IMR-90 (cell line): ENCODE measurements at regions of chr17 and their contacts with region 1.

Region 1: GRCh38 chr17:35460354-35460851 is 11.8 kb upstream of the SLFN13 start:
- DNase-seq: no peak
- ATAC-seq: no peak; the same call in 1 of the 2 replicates
- H3K4me3 ChIP-seq: no peak overlapping the region
- H3K27ac ChIP-seq: no peak overlapping the region
- H3K4me1 ChIP-seq: no peaks in the 10 kb centered on the region
- H3K27me3 ChIP-seq: peaks cover 20% of the 10 kb centered on the region
- CTCF ChIP-seq: no peak
- POLR2A ChIP-seq: no peak
- RAD21 ChIP-seq: no peak

Region 2: DNA sequence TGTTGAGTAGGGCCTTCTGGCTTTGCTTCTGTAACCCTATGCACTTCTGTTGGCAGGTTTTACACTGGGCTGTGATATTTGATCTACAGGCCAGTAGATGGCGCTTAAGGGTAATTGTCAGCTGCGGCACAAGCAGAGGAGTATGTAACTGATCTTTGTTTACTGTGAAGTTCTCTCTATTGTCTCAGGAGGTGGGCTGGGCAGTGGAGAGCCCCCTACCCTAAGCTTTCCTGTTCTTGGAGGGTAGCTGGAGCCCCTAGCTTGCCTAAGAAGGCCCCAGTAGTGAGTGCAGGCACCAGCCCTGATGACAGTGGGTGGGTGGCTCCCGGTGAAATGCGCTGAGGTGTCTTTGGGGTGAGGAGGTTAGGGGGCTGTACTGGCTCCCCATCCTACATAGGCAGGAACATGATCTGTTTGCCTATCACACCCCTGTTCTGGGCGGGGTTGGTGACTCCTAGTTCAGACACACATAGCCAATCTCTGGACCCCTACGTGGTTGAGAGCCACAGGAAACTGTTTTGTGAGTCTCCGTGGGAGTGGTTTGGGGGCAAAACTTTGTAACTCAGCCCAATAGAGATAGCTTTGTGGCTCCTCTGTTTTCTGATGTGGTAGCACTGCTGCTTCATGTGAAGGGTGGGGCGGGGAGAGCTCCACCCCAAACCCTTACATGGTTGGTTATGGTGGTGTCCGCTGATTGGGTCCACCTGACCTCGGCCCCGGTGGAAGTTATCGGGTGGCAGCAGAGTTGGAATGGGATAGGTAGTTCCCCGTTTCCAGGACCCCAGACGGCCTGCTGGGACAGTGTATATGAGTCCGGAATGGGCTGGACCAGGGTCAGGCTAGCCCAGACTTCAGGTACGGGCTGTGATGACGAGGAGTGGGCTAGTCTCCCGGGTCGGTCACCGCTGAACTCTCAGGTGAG is 147.4 kb before region 1 on chr17:
- CTCF ChIA-PET with region 1: no interaction called
- POLR2A ChIA-PET with region 1: no interaction called
- dilution Hi-C with region 1: no loop called
- in situ Hi-C with region 1: no loop called
- intact Hi-C with region 1: no loop called
- DNase-seq: peak; percentile 73
- ATAC-seq: peak; percentile 94
- H3K4me3 ChIP-seq: no peak overlapping the region
- H3K27ac ChIP-seq: no peak overlapping the region
- H3K4me1 ChIP-seq: peaks cover 3% of the 10 kb centered on the region; the same call in 1 of the 2 replicates
- H3K27me3 ChIP-seq: no peaks in the 10 kb centered on the region
- CTCF ChIP-seq: peak; percentile 80
- POLR2A ChIP-seq: no peak
- RAD21 ChIP-seq: peak; percentile 81

Region 3: GRCh38 chr17:35553310-35553709 is 92.9 kb after region 1 on chr17:
- CTCF ChIA-PET with region 1: no interaction called
- POLR2A ChIA-PET with region 1: no interaction called
- dilution Hi-C with region 1: no loop called
- in situ Hi-C with region 1: no loop called
- intact Hi-C with region 1: loop called (anchors 1 kb)
- DNase-seq: no peak
- ATAC-seq: no peak
- H3K4me3 ChIP-seq: no peak overlapping the region
- H3K27ac ChIP-seq: no peak overlapping the region
- H3K4me1 ChIP-seq: no peaks in the 10 kb centered on the region
- H3K27me3 ChIP-seq: peaks cover 28% of the 10 kb centered on the region
- CTCF ChIP-seq: no peak
- POLR2A ChIP-seq: no peak
- RAD21 ChIP-seq: no peak